Mammary epithelial cell (primary cell): ENCODE measurements at regions of chr13 and their contacts with region 1.

Region 1: GRCh38 chr13:73303851-73304250 is 245.0 kb downstream of the KLF5 start:
- DNase-seq: peak; percentile 92
- H3K4me3 ChIP-seq: no peak overlapping the region
- H3K27ac ChIP-seq: peak overlapping the region; percentile 52
- H3K4me1 ChIP-seq: peaks cover 13% of the 10 kb centered on the region
- H3K27me3 ChIP-seq: no peaks in the 10 kb centered on the region
- CTCF ChIP-seq: no peak

Region 2: GRCh38 chr13:73268306-73268705 is 35.5 kb before region 1 on chr13:
- CTCF ChIA-PET with region 1: no interaction called
- dilution Hi-C with region 1: no loop called
- in situ Hi-C with region 1: no loop called
- intact Hi-C with region 1: loop called (anchors 5 kb)
- DNase-seq: peak; percentile 87
- H3K4me3 ChIP-seq: no peak overlapping the region
- H3K27ac ChIP-seq: no peak overlapping the region
- H3K4me1 ChIP-seq: peaks cover 15% of the 10 kb centered on the region
- H3K27me3 ChIP-seq: no peaks in the 10 kb centered on the region
- CTCF ChIP-seq: no peak

Region 3: GRCh38 chr13:73544175-73544574 is 240.3 kb after region 1 on chr13:
- CTCF ChIA-PET with region 1: interaction called, 24 read pairs
- dilution Hi-C with region 1: no loop called
- in situ Hi-C with region 1: no loop called
- intact Hi-C with region 1: no loop called
- DNase-seq: no peak
- H3K4me3 ChIP-seq: no peak overlapping the region
- H3K27ac ChIP-seq: no peak overlapping the region
- H3K4me1 ChIP-seq: peaks cover 18% of the 10 kb centered on the region
- H3K27me3 ChIP-seq: no peaks in the 10 kb centered on the region
- CTCF ChIP-seq: peak in 1 of 2 donors; percentile 27